Right ventricle myocardium superior (tissue), 1 donor: ENCODE measurements at regions of chr11 and their contacts with region 1.

Region 1: DNA sequence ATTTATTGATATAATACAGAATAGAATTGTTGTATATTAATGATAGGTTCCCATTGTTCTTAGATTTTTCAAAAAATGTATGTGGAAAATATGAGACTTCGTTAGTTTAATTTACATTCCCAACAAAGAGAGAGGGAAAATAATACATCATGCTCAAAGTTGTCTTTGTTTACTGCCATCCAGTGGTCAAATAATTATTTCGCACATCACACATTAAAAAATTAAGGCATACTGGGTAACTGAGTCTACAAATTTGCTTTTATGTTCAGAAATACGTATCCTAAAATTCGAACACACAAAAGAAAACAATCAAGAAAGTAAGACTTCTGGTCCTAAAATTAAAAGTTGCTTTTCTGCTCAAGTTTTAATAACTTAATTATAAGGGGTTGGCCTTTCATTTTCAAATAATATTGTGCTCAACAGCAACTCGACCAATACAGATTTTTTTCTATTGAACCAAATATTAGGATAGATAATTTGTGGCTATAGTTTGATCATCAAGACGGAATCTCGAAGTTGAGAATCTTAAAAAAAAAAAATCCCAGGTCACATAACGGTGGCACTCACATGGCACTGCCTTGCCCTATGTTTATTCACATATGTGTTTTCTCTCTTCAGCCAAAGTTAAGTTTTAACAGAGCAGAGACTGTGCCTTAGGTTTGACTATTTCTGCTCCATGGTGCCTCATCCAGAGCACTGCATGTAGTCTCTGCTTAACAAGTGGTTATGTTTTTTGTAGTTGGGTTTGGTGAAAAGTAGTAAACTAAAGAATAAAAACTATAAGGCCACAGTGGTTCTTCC is 12.3 kb downstream of the PDGFD start:
- DNase-seq: no peak
- ATAC-seq: no peak

Region 2: GRCh38 chr11:103927535-103927934 is 224.1 kb before region 1 on chr11:
- intact Hi-C with region 1: loop called (anchors 10 kb)
- DNase-seq: no peak
- ATAC-seq: peak; percentile 78

Region 3: GRCh38 chr11:103947546-103947919 is 204.1 kb before region 1 on chr11:
- intact Hi-C with region 1: no loop called
- DNase-seq: no peak
- ATAC-seq: peak; percentile 76

Region 4: GRCh38 chr11:104073950-104074705 is 77.5 kb before region 1 on chr11:
- intact Hi-C with region 1: no loop called
- DNase-seq: no peak
- ATAC-seq: peak; percentile 62